ENCODE measurements at regions of chr12 and their contacts with region 1.

Region 1: GRCh38 chr12:56448860-56449621 is at the start of gene TIMELESS:
- DNase-seq: peak; percentile 63 to 93 (median 83)
- ATAC-seq: peak; percentile 95
- H3K4me3 ChIP-seq: peak within 1 kb of the TSS; percentile 84 to 94
- H3K4me3 Mint-ChIP-seq: peak within 1 kb of the TSS; percentile 91
- H3K27ac ChIP-seq: peak within 1 kb of the TSS; percentile 34 to 68
- H3K27ac Mint-ChIP-seq: peak within 1 kb of the TSS; percentile 86
- H3K4me1 ChIP-seq: peaks cover 7% of the 10 kb centered on the region
- H3K4me1 Mint-ChIP-seq: peaks cover 14% of the 10 kb centered on the region
- H3K27me3 ChIP-seq: no peaks in the 10 kb centered on the region
- H3K27me3 Mint-ChIP-seq: no peaks in the 10 kb centered on the region
- CTCF ChIP-seq: no peak
- total RNA-seq, gene TIMELESS: 1.7 to 2.2 TPM

Region 2: DNA sequence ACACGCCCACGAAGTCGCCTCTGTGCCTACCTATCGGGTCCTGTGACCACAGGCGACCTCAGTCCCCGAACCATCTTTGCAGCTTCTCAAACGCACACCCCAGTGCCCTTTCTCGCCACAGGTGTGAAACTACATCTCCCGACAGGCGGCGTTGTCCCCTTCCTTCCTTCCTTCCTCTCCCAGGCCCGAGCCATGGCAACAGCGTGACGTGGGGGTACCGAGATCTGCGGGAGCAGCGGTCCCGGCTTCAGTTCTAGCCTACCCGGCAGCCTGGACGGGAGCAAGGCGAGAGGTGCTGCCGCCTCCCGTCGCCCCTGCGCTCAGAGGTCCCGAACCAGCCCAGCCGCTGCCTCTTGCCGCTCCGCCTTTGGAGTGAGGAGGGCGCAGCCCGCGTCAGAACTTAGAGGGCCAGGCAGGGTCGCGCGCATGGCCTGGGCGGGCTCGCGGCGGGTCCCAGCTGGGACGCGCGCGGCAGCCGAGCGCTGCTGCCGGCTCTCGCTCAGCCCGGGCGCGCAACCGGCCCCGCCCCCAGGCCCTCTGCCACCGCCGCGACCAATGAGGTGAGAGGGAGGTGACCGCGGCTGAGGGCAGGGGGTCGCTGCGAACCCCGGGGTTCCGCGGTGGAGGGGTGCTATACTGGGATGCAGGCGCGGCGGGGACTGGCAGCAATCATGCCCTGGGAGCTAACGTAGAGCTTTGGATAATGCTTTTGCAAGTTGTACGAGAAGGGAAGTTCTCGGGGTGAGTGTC is 182.2 kb before region 1 on chr12 and contains the start of gene COQ10A:
- CTCF ChIA-PET with region 1: no interaction called
- POLR2A ChIA-PET with region 1: no interaction called
- intact Hi-C with region 1: loop called in 1 of 2 experiments (anchors 1 kb)
- DNase-seq: peak; percentile 77 to 95 (median 92)
- ATAC-seq: peak; percentile 87
- H3K4me3 ChIP-seq: peak within 1 kb of the TSS; percentile 87 to 89
- H3K4me3 Mint-ChIP-seq: peak within 1 kb of the TSS; percentile 92
- H3K27ac ChIP-seq: peak within 1 kb of the TSS; percentile 95 to 98
- H3K27ac Mint-ChIP-seq: peak within 1 kb of the TSS; percentile 92
- H3K4me1 ChIP-seq: peaks cover 12% of the 10 kb centered on the region
- H3K4me1 Mint-ChIP-seq: peaks cover 20% of the 10 kb centered on the region
- H3K27me3 ChIP-seq: no peaks in the 10 kb centered on the region
- H3K27me3 Mint-ChIP-seq: no peaks in the 10 kb centered on the region
- CTCF ChIP-seq: peak; percentile 66
- total RNA-seq, gene COQ10A: 29.5 to 38.8 TPM

Region 3: DNA sequence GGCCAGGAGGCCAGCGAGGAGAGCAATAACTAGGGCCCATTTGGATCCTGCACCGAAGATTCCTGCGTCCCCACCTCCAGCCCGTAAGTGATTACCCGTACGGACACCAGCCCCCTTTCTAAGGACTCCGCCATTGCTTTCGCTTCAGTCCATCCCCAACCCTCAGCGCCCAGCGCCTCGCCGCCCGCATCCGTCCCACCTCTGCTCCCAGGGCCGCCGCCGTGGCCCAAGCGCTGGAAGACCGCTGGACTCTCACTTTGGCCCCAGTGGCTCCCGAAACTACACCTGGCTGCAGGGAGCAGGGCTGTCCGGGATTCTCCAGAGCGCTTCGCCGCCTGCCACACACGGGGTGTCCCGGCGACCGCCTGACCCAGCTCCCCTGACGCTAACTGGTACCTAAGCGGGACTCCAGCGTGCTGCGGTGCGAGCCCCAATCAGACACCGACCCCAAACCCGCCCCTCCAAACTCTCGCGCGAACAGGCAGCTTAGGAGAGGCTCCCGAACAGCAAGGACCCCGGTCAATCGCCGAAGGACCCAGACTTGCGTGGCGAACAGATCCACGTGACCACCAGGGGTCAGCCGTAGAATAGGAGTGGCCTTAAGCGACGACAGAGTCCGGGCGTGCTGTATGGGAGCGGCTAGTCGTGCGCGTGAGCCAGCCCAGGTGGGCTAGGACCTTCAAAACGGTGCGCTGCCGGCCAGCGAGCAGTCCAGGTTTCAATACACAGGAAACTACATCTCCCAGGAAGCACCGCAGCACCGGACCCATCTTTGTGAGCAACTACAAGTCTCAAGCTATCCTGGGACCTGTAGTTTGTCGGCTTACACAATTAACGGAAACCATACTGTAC is 133.2 kb before region 1 on chr12 and contains the start of gene CNPY2:
- CTCF ChIA-PET with region 1: no interaction called
- POLR2A ChIA-PET with region 1: interaction called, 8 read pairs
- intact Hi-C with region 1: loop called (anchors 1 to 5 kb)
- DNase-seq: peak; percentile 89 to 97 (median 95)
- ATAC-seq: peak; percentile 92
- H3K4me3 ChIP-seq: peak within 1 kb of the TSS; percentile 86 to 99
- H3K4me3 Mint-ChIP-seq: peak within 1 kb of the TSS; percentile 99
- H3K27ac ChIP-seq: peak within 1 kb of the TSS; percentile 70 to 98
- H3K27ac Mint-ChIP-seq: peak within 1 kb of the TSS; percentile 98
- H3K4me1 ChIP-seq: peaks cover 10% of the 10 kb centered on the region
- H3K4me1 Mint-ChIP-seq: peaks cover 16% of the 10 kb centered on the region
- H3K27me3 ChIP-seq: no peaks in the 10 kb centered on the region
- H3K27me3 Mint-ChIP-seq: no peaks in the 10 kb centered on the region
- CTCF ChIP-seq: no peak
- total RNA-seq, gene CNPY2: 23.5 to 33.9 TPM

Region 4: DNA sequence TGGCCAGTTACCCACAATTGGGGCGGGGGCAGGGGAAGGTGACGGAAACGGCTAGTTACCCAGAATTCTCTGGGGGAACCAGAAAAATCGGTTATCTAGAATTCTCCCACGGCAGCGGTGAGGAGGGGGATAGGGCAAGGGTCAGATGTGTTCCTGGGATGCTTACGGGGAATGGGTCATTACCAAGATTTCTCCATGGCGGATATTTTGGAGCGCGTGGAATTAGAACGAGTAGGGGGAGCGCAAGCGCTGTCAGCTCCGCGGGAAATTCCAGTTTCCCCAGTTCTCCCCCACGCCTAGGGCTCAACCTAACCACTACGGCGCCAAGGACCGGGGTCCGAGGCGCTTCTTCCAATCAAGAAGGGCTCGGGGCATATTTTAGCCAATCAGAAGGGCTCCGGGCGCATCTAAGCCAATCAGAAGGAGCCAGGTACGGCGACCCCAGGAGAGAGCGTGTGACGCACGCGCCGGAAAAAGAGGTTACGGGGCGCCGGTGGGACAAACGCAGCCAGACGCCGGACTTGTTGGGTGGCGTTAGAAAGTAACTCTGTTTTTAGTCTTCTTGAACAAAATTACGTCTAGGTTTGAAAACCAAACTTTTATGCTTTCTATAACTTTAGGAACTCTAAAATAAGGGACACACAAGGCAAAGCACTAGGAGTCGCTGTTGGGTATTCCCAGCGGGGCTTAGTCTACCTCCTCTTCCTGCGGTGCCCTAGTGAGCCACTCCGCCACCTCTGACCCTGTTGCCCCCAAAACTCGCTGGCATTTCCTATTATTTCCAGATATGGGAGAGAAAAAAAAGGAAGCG is 115.2 kb before region 1 on chr12 and contains the start of gene PAN2:
- CTCF ChIA-PET with region 1: no interaction called
- POLR2A ChIA-PET with region 1: interaction called, 9 read pairs
- intact Hi-C with region 1: loop called (anchors 1 kb)
- DNase-seq: peak; percentile 87 to 98 (median 93)
- ATAC-seq: peak; percentile 80
- H3K4me3 ChIP-seq: peak within 1 kb of the TSS; percentile 47 to 85
- H3K4me3 Mint-ChIP-seq: peak within 1 kb of the TSS; percentile 96
- H3K27ac ChIP-seq: peak within 1 kb of the TSS; percentile 97 to 100
- H3K27ac Mint-ChIP-seq: peak within 1 kb of the TSS; percentile 100
- H3K4me1 ChIP-seq: peaks cover 27% of the 10 kb centered on the region
- H3K4me1 Mint-ChIP-seq: peaks cover 53% of the 10 kb centered on the region
- H3K27me3 ChIP-seq: no peaks in the 10 kb centered on the region
- H3K27me3 Mint-ChIP-seq: no peaks in the 10 kb centered on the region
- CTCF ChIP-seq: peak; percentile 64
- total RNA-seq, gene PAN2: 111 to 113 TPM

Region 5: GRCh38 chr12:56488041-56488955 is 39.3 kb after region 1 on chr12 and contains the start of gene GLS2:
- CTCF ChIA-PET with region 1: no interaction called
- POLR2A ChIA-PET with region 1: no interaction called
- intact Hi-C with region 1: no loop called
- DNase-seq: peak; percentile 48 to 89 (median 74)
- ATAC-seq: peak; percentile 97
- H3K4me3 ChIP-seq: peak within 1 kb of the TSS; percentile 63 to 64
- H3K4me3 Mint-ChIP-seq: peak within 1 kb of the TSS; percentile 93
- H3K27ac ChIP-seq: no peak within 1 kb of the TSS
- H3K27ac Mint-ChIP-seq: peak within 1 kb of the TSS; percentile 77
- H3K4me1 ChIP-seq: peaks cover 12% of the 10 kb centered on the region
- H3K4me1 Mint-ChIP-seq: peaks cover 18% of the 10 kb centered on the region
- H3K27me3 ChIP-seq: no peaks in the 10 kb centered on the region
- H3K27me3 Mint-ChIP-seq: peaks cover 17% of the 10 kb centered on the region
- CTCF ChIP-seq: no peak
- total RNA-seq, gene GLS2: 1.5 to 1.7 TPM

Region 6: GRCh38 chr12:56862264-56862663 is 413.2 kb after region 1 on chr12:
- CTCF ChIA-PET with region 1: no interaction called
- POLR2A ChIA-PET with region 1: no interaction called
- intact Hi-C with region 1: no loop called
- DNase-seq: no peak
- ATAC-seq: no peak
- H3K4me3 ChIP-seq: no peak overlapping the region
- H3K4me3 Mint-ChIP-seq: no peak overlapping the region
- H3K27ac ChIP-seq: no peak overlapping the region
- H3K27ac Mint-ChIP-seq: no peak overlapping the region
- H3K4me1 ChIP-seq: no peaks in the 10 kb centered on the region
- H3K4me1 Mint-ChIP-seq: no peaks in the 10 kb centered on the region
- H3K27me3 ChIP-seq: peaks cover 0 to 2% of the 10 kb centered on the region in 2 experiments
- H3K27me3 Mint-ChIP-seq: peaks cover 18% of the 10 kb centered on the region
- CTCF ChIP-seq: no peak

Measured in CD8-positive, alpha-beta T cell (primary cell).